H1 (cell line): ENCODE measurements at regions of chr1 and their contacts with region 1.

Region 1: DNA sequence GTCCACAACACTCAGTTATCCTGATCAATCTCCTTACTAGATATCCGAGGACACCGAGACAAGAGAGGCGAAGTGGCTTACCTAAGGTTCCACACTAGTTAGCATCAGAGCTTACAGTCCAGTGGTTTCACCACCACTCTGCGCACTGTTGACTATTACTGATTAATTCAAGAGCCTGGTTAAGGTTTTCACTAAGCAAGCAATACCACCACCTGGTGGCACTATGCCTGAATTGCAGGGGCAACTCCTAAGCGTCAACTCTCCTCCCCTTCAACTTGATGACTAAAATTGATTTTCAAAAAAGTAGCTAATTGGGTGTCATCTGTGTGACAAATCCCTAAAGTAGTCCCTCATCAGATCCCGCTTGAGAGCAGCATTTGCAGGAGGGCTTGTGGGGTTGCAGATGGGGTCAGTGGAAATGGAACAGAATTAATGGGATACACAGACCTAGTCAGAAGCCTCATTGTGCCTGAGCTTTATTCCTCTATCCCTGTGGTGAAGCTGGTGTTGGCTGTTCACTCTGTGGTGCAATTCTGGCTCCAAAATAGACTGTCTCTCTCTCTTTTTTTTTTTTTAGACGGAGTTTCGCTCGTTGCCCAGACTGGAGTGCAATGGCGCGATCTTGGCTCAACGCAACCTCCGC is 9.1 kb downstream of the TTC22 start:
- DNase-seq: peak in 1 of 2 experiments; percentile 94
- H3K4me3 ChIP-seq: no peak overlapping the region
- H3K27ac ChIP-seq: no peak overlapping the region
- H3K4me1 ChIP-seq: peaks cover 9 to 26% (median 18%) of the 10 kb centered on the region in 4 experiments
- H3K27me3 ChIP-seq: no peaks in the 10 kb centered on the region
- CTCF ChIP-seq: peak; percentile 62 to 86 (median 77)
- EP300 ChIP-seq: no peak
- POLR2A ChIP-seq: no peak
- RAD21 ChIP-seq: peak; percentile 88 to 91

Region 2: DNA sequence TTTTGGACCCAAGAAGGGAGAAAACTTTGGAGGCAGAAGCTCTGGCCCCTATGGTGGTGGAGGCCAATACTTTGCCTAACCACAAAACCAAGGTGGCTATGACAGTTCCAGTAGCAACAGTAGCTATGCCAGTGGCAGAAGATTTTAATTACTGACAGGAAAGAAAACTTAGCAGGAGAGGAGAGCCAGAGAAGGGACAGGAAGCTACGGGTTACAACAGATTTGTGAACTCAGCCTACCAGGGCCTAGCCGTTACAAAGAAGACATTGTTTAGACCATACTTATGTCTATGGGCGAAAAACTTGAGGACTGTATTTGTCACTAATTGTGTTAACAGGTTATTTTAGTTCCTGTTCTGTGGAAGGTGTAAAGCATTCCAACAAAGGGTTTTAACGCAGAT is 254.4 kb before region 1 on chr1:
- CTCF ChIA-PET with region 1: no interaction called
- POLR2A ChIA-PET with region 1: no interaction called
- DNase-seq: no peak
- H3K4me3 ChIP-seq: no peak overlapping the region
- H3K27ac ChIP-seq: no peak overlapping the region
- H3K4me1 ChIP-seq: peaks cover 0 to 4% (median 4%) of the 10 kb centered on the region in 4 experiments; a peak in 5 of 7 replicates
- H3K27me3 ChIP-seq: no peaks in the 10 kb centered on the region
- CTCF ChIP-seq: no peak
- EP300 ChIP-seq: no peak
- POLR2A ChIP-seq: no peak
- RAD21 ChIP-seq: no peak

Region 3: GRCh38 chr1:54671985-54672608 is 119.9 kb before region 1 on chr1:
- CTCF ChIA-PET with region 1: interaction called, 70 read pairs
- POLR2A ChIA-PET with region 1: no interaction called
- DNase-seq: peak; percentile 38 to 95
- H3K4me3 ChIP-seq: no peak overlapping the region
- H3K27ac ChIP-seq: no peak overlapping the region
- H3K4me1 ChIP-seq: peaks cover 0 to 3% (median 0%) of the 10 kb centered on the region in 4 experiments; a peak in 1 of 7 replicates
- H3K27me3 ChIP-seq: no peaks in the 10 kb centered on the region
- CTCF ChIP-seq: peak; percentile 75 to 97 (median 94)
- EP300 ChIP-seq: no peak
- POLR2A ChIP-seq: no peak
- RAD21 ChIP-seq: peak; percentile 96 to 99

Region 4: GRCh38 chr1:54698346-54698745 is 93.7 kb before region 1 on chr1:
- CTCF ChIA-PET with region 1: interaction called, 13 read pairs
- POLR2A ChIA-PET with region 1: no interaction called
- DNase-seq: no peak
- H3K4me3 ChIP-seq: no peak overlapping the region
- H3K27ac ChIP-seq: no peak overlapping the region
- H3K4me1 ChIP-seq: no peaks in the 10 kb centered on the region
- H3K27me3 ChIP-seq: no peaks in the 10 kb centered on the region
- CTCF ChIP-seq: no peak
- EP300 ChIP-seq: no peak
- POLR2A ChIP-seq: no peak
- RAD21 ChIP-seq: no peak

Region 5: GRCh38 chr1:54721719-54722118 is 70.3 kb before region 1 on chr1:
- CTCF ChIA-PET with region 1: interaction called, 22 read pairs
- POLR2A ChIA-PET with region 1: no interaction called
- DNase-seq: no peak
- H3K4me3 ChIP-seq: no peak overlapping the region
- H3K27ac ChIP-seq: no peak overlapping the region
- H3K4me1 ChIP-seq: no peaks in the 10 kb centered on the region
- H3K27me3 ChIP-seq: no peaks in the 10 kb centered on the region
- CTCF ChIP-seq: no peak
- EP300 ChIP-seq: no peak
- POLR2A ChIP-seq: no peak
- RAD21 ChIP-seq: no peak

Region 6: DNA sequence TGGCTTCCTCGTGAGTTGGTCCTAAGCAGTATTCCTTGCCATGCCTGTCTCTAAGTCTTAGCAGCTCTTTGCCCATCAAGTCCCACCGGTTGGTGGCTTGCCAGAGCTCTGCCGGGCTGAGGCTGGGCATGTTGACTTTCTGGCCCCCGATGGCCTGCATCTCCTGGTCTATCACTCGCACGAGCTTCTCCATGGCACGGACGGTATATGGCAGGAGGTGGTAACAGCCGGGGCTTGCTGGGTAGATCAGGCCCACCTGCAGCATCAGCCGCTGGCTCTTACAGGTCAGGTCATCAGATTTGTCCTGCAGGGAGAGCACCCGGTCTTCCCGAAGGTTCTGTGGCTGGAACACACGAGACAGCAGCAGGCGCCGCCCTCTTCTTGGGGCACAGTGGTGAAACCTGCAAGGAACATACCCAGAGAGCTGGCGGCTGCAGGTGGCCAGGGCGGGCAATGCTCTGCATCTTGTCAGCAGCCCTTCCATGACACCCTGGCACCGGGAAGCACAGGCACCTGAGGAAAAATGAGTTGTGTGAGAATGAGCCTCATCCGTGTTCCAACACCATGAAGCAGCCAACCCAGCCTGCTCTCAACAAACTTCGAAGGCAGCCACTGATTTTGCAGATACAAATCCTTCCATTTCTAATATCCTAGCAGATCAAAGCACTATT is 33.2 kb before region 1 on chr1:
- CTCF ChIA-PET with region 1: interaction called, 12 read pairs
- POLR2A ChIA-PET with region 1: interaction called, 3 read pairs
- DNase-seq: no peak
- H3K4me3 ChIP-seq: no peak overlapping the region
- H3K27ac ChIP-seq: no peak overlapping the region
- H3K4me1 ChIP-seq: no peaks in the 10 kb centered on the region; a peak in 3 of 7 replicates
- H3K27me3 ChIP-seq: no peaks in the 10 kb centered on the region
- CTCF ChIP-seq: no peak
- EP300 ChIP-seq: no peak
- POLR2A ChIP-seq: no peak
- RAD21 ChIP-seq: no peak

Region 7: GRCh38 chr1:54774820-54775498 is 17.0 kb before region 1 on chr1:
- CTCF ChIA-PET with region 1: interaction called, 31 read pairs
- POLR2A ChIA-PET with region 1: interaction called, 3 read pairs
- DNase-seq: peak; percentile 49 to 89
- H3K4me3 ChIP-seq: peak overlapping the region in 1 of 4 experiments; percentile 17; a peak in 1 of 8 replicates
- H3K27ac ChIP-seq: no peak overlapping the region
- H3K4me1 ChIP-seq: peaks cover 0 to 4% (median 3%) of the 10 kb centered on the region in 4 experiments; a peak in 2 of 7 replicates
- H3K27me3 ChIP-seq: peaks cover 0 to 4% (median 0%) of the 10 kb centered on the region in 4 experiments; a peak in 1 of 7 replicates
- CTCF ChIP-seq: no peak
- EP300 ChIP-seq: no peak
- POLR2A ChIP-seq: no peak
- RAD21 ChIP-seq: no peak

Region 8: DNA sequence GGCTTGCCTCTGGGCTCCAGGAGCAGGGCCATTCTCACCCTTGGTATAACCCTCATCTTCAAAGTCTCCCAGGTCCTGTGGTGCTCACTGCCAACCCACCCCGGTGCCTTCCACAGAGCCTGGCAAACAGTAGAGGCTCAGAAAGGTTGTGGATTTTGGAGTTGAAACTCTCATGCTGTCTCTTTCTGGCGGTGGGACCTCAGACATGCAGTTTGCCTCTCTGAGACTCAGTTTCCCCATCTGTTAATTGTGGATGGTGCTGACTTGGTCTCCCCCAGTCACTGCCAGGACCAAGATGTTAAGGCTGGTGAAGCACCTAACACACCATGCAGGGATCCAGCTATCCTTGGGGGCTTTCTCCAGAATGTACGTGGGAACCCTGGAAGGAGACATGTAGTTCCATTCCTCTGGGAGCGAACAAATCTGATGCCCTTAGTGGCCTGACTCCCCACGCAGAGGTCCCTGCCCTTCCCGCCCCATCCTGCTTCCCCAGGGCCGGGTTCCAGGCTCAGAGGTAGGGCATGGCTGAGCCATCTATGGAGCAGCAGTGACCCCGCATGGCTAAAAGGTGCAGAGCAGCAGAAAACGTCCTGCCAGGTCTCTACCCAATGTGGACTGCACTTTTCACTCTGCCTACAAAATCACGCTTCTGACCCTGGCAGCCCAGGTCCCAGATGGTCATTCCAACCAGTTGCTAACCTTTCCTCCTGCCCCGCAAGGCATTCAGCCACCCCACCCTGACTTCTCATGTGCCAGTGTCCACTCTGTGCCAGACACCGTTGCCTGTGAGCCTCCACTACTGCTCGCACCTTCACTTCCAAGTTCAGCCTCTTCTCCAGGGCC is 18.3 kb after region 1 on chr1:
- CTCF ChIA-PET with region 1: interaction called, 80 read pairs
- POLR2A ChIA-PET with region 1: no interaction called
- DNase-seq: peak in 1 of 2 experiments; percentile 92
- H3K4me3 ChIP-seq: no peak overlapping the region
- H3K27ac ChIP-seq: no peak overlapping the region
- H3K4me1 ChIP-seq: peaks cover 4 to 29% (median 18%) of the 10 kb centered on the region in 4 experiments
- H3K27me3 ChIP-seq: no peaks in the 10 kb centered on the region; a peak in 2 of 7 replicates
- CTCF ChIP-seq: peak; percentile 91 to 96 (median 91)
- EP300 ChIP-seq: no peak
- POLR2A ChIP-seq: no peak
- RAD21 ChIP-seq: peak; percentile 98

Region 9: GRCh38 chr1:55039342-55040082 is 247.5 kb after region 1 on chr1 and contains the start of gene PCSK9:
- CTCF ChIA-PET with region 1: no interaction called
- POLR2A ChIA-PET with region 1: no interaction called
- DNase-seq: peak in 1 of 2 experiments; percentile 84
- H3K4me3 ChIP-seq: peak within 1 kb of the TSS; percentile 48 to 65 (median 56)
- H3K27ac ChIP-seq: no peak within 1 kb of the TSS
- H3K4me1 ChIP-seq: peaks cover 0 to 13% (median 9%) of the 10 kb centered on the region in 4 experiments; a peak in 6 of 7 replicates
- H3K27me3 ChIP-seq: peaks cover 9 to 39% (median 37%) of the 10 kb centered on the region in 4 experiments
- CTCF ChIP-seq: no peak
- EP300 ChIP-seq: no peak
- POLR2A ChIP-seq: 0 out of 3 replicates have a peak, but pooled peaks of 1 of the 2 experiments have one; percentile 33
- RAD21 ChIP-seq: no peak
- total RNA-seq, gene PCSK9: 32.3 and 33.8 TPM in 2 replicates